ENCODE measurements at regions of chr16 and their contacts with region 1.

Region 1: GRCh38 chr16:3264137-3265036 is 8.0 kb upstream of the MEFV start:
- DNase-seq: peak; percentile 99
- ATAC-seq: peak; percentile 92
- H3K4me3 Mint-ChIP-seq: peak overlapping the region; percentile 87
- H3K27ac Mint-ChIP-seq: peak overlapping the region; percentile 98
- H3K4me1 Mint-ChIP-seq: peaks cover 31% of the 10 kb centered on the region
- H3K27me3 Mint-ChIP-seq: no peaks in the 10 kb centered on the region

Region 2: DNA sequence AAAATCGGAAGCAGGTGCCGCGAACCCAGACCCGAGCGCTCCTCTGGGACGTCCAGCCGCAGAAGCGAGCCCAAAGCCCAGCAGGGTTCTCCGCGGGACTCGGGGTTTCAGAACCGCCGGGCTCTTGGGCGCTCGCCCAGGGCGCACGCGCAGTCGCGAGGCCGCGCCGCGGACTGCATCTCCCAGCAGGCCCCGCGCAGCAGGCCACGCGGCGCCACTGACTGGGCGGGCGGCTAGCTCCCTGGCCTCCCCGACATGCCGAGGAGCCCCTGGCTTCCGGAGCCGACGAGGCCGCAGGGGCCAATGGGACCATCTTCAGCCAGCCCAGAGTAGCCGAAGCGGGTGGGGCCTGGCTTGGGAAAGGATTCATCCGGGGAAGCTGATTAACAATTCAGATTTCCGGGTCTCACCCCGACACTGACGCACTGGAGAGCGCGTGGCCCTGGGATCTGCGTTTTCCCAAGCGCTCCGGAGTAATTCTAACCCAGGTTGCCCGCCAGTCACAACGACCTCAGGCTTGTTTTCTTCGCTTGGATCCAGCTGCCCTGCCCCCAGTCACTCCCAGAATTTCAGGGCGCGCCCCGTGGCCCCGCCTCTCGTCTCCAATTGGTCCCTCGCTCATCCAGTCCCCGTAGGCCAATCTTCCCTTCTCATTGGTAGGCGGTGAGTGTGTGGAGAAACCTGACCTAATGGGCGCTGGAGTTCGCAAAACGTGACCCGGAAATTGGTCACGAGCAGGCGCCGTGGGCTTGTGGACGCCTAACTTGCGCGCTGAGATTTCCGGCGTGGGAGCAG is 18.5 kb after region 1 on chr16 and contains the start of gene ZNF263:
- CTCF ChIA-PET with region 1: interaction called, 44 read pairs
- DNase-seq: peak; percentile 96
- ATAC-seq: peak; percentile 90
- H3K4me3 Mint-ChIP-seq: peak within 1 kb of the TSS; percentile 83
- H3K27ac Mint-ChIP-seq: peak within 1 kb of the TSS; percentile 98
- H3K4me1 Mint-ChIP-seq: peaks cover 35% of the 10 kb centered on the region
- H3K27me3 Mint-ChIP-seq: peaks cover 10% of the 10 kb centered on the region
- total RNA-seq, gene ZNF263: 21.5 to 25.6 TPM

Measured in activated CD8-positive, alpha-beta memory T cell treated with anti-CD3 and anti-CD28 coated beads, Interleukin-2, amount 10 ng/mL, durations not matched to agents 7 days and 5 days (primary cell).